Activated CD4-positive, alpha-beta memory T cell treated with anti-CD3 and anti-CD28 coated beads for 36 hours (primary cell): ENCODE measurements at regions of chr2 and their contacts with region 1.

Region 1: DNA sequence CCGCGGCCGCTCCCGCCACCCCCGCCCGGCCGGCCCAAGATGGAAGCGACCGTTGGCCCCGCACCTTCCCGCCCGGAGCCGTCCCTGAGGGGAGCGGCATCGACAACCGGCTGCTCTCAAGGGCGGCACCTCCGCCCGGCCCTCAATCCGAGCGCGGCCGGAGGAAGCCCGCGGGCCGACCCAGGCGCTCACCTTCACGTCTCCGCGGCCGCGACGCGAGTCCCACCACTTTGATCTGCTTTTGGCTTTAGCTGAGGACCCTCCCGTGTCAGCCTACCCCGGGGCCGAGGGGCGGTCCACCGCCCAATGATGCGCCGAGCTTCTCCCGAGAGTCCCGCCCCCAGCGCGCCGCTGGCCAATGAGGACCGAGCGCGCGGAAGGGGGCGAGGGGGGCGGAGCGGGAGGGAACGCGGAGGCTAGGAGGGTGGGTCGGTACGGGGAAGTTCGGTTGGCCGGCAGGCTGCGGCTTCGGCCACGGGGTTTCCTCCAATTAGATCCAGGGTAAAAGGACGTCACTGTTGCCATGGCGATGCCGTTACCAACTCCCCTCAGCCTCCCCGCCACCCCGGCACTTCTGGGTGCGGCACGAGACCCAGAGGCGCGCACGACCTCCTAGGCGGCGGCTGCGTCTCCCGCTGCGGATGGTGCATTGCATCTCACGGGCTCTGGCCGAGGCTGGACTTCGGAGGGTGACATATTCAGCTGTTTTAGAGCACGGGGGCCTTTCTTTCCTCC is at the start of gene YWHAQ:
- DNase-seq: peak; percentile 98
- H3K4me3 Mint-ChIP-seq: peak within 1 kb of the TSS; percentile 97
- H3K27ac Mint-ChIP-seq: peak within 1 kb of the TSS; percentile 95
- H3K4me1 Mint-ChIP-seq: peaks cover 45% of the 10 kb centered on the region
- H3K27me3 Mint-ChIP-seq: no peaks in the 10 kb centered on the region
- total RNA-seq, gene YWHAQ: 495 to 541 TPM

Region 2: GRCh38 chr2:9555297-9556141 is 75.4 kb before region 1 on chr2 and contains the start of gene ADAM17:
- CTCF ChIA-PET with region 1: interaction called, 4 read pairs
- POLR2A ChIA-PET with region 1: interaction called, 38 read pairs
- intact Hi-C with region 1: loop called (anchors 1 kb)
- DNase-seq: peak; percentile 93
- H3K4me3 Mint-ChIP-seq: peak within 1 kb of the TSS; percentile 100
- H3K27ac Mint-ChIP-seq: peak within 1 kb of the TSS; percentile 98
- H3K4me1 Mint-ChIP-seq: peaks cover 50% of the 10 kb centered on the region
- H3K27me3 Mint-ChIP-seq: no peaks in the 10 kb centered on the region
- total RNA-seq, gene ADAM17: 24.0 to 24.7 TPM

Region 3: DNA sequence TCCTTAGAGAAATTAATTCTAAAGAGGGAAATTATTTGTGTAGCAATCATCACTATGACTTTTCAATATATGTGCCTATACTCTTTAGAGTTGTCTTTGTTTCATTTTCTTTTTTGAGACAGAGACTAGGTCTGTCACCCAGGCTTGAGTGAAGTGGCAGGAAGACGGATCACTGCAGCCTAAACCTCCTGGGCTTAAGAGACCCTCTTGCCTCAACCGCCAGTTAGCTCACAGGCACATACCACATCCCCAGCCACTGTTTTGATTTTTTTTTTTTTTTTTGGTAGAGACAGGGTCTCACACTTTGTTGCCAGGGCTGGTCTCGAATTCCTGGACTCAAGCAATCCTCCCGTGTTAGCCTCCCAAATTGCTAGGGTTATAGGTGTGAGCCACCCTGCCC is 12.5 kb before region 1 on chr2:
- CTCF ChIA-PET with region 1: interaction called, 4 read pairs
- POLR2A ChIA-PET with region 1: interaction called, 15 read pairs
- intact Hi-C with region 1: loop called (anchors 1 kb)
- DNase-seq: peak; percentile 37
- H3K4me3 Mint-ChIP-seq: peak overlapping the region; percentile 50
- H3K27ac Mint-ChIP-seq: peak overlapping the region; percentile 80
- H3K4me1 Mint-ChIP-seq: peaks cover 92% of the 10 kb centered on the region
- H3K27me3 Mint-ChIP-seq: no peaks in the 10 kb centered on the region

Region 4: DNA sequence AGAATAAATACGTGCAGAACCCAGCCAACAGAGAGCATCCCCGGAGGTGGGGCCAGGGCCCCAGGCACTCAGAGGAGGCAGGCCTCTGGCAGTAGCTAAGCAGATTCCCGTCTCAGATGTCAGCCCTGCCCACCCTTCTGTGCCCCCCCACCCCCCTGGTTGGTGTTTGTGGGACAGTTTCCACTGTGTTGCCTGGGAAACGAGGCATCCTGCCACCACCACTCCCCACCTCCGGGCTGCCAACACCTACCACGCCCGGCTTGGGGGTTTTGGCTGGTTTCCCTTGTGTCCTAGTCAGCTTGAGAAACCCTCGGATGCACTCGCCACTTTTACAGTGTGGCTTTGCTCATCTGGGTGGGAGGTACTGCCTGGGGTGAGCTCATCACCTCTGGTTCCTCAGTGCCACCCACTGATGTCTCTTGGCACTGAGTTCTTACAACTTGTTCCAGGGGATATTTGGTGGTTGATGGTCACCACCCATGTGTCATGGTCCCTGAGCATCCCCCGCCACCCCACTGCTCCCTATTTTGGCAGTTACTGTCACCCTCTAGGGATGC is 72.2 kb after region 1 on chr2:
- CTCF ChIA-PET with region 1: interaction called, 13 read pairs
- POLR2A ChIA-PET with region 1: interaction called, 19 read pairs
- intact Hi-C with region 1: loop called (anchors 1 kb)
- DNase-seq: peak; percentile 95
- H3K4me3 Mint-ChIP-seq: no peak overlapping the region
- H3K27ac Mint-ChIP-seq: peak overlapping the region; percentile 75
- H3K4me1 Mint-ChIP-seq: peaks cover 54% of the 10 kb centered on the region
- H3K27me3 Mint-ChIP-seq: peaks cover 3% of the 10 kb centered on the region

Region 5: DNA sequence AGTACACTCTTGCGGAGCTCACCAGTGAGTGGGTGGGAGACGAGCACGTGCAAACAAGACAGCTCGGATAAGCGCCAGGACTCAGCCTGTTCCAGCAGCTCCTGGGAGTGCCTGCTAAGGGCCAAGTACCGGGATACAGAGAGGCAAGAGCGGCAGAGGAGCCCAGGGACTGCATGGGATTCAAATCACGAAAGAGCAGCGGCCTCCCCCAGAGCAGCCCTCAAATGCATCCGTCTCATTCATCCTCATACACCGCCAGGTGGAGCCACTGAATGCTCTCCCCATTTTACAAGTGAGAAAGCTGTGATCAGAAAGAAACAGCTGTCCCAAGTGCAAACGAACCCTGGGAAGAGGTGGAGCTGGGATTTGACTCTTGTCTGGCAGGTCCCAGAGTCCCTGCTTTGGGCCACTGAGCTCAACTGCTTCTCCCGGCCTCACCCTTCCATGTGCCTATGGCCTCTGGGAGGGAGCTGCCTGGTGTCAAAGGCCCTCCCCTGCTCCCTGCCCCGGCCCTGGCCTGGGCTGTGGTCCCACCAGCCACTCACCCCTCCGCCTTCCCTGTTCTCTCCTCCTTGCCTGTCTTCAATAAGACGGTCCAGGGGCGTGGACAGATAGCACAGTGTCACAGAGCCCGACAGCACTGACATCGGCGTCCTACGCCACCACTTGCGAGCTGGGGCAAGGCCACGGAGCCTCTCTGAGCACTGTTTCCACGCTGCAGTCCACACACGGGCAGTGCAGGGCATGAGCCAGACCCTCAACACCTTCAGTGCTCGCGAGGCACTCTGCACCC is 139.6 kb after region 1 on chr2:
- CTCF ChIA-PET with region 1: interaction called, 10 read pairs
- POLR2A ChIA-PET with region 1: interaction called, 3 read pairs
- intact Hi-C with region 1: no loop called
- DNase-seq: peak; percentile 74
- H3K4me3 Mint-ChIP-seq: no peak overlapping the region
- H3K27ac Mint-ChIP-seq: no peak overlapping the region
- H3K4me1 Mint-ChIP-seq: peaks cover 23% of the 10 kb centered on the region
- H3K27me3 Mint-ChIP-seq: no peaks in the 10 kb centered on the region

Region 6: GRCh38 chr2:10043906-10044601 is 413.1 kb after region 1 on chr2:
- CTCF ChIA-PET with region 1: interaction called, 3 read pairs
- POLR2A ChIA-PET with region 1: no interaction called
- intact Hi-C with region 1: loop called (anchors 5 kb)
- DNase-seq: peak; percentile 94
- H3K4me3 Mint-ChIP-seq: peak overlapping the region; percentile 64
- H3K27ac Mint-ChIP-seq: peak overlapping the region; percentile 47
- H3K4me1 Mint-ChIP-seq: peaks cover 22% of the 10 kb centered on the region
- H3K27me3 Mint-ChIP-seq: peaks cover 3% of the 10 kb centered on the region